Activated B cell treated with CpG ODN at 0.5 μM for 24 hours (primary cell): ENCODE measurements at regions of chr16 and their contacts with region 1.

Region 1: DNA sequence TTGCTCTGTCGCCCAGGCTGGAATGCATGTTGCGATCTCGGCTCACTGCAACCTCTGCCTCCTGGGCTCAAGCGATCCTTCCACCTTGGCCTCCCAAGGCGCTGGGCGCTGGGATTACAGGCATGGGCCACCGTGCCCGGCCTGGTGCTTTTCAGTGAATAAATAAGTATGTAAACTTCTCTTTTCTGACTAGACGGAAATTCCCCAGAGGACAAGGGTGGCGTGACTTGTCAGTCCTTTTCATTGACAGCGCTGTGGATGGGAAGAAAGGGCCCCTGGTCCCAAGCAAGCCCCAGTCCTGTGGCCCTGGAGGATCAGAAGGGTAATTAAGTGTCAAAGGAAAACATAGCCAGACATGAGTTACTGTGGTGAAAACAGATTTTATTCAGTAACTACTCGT is 9.6 kb upstream of the SPN start:
- DNase-seq: peak; percentile 38
- ATAC-seq: peak; percentile 94
- H3K4me3 Mint-ChIP-seq: peak overlapping the region; percentile 62
- H3K27ac Mint-ChIP-seq: peak overlapping the region; percentile 73
- H3K4me1 Mint-ChIP-seq: peaks cover 19% of the 10 kb centered on the region
- H3K27me3 Mint-ChIP-seq: no peaks in the 10 kb centered on the region
- CTCF ChIP-seq: no peak

Region 2: GRCh38 chr16:29664091-29664921 is 10.8 kb after region 1 on chr16:
- CTCF ChIA-PET with region 1: no interaction called
- POLR2A ChIA-PET with region 1: interaction called, 4 read pairs
- intact Hi-C with region 1: loop called (anchors 2 kb)
- DNase-seq: no peak
- ATAC-seq: peak; percentile 18
- H3K4me3 Mint-ChIP-seq: peak overlapping the region; percentile 74
- H3K27ac Mint-ChIP-seq: peak overlapping the region; percentile 68
- H3K4me1 Mint-ChIP-seq: peaks cover 63% of the 10 kb centered on the region
- H3K27me3 Mint-ChIP-seq: no peaks in the 10 kb centered on the region
- CTCF ChIP-seq: no peak

Region 3: GRCh38 chr16:29717113-29717512 is 63.6 kb after region 1 on chr16:
- CTCF ChIA-PET with region 1: no interaction called
- POLR2A ChIA-PET with region 1: no interaction called
- intact Hi-C with region 1: no loop called
- DNase-seq: no peak
- ATAC-seq: no peak
- H3K4me3 Mint-ChIP-seq: no peak overlapping the region
- H3K27ac Mint-ChIP-seq: no peak overlapping the region
- H3K4me1 Mint-ChIP-seq: peaks cover 7% of the 10 kb centered on the region
- H3K27me3 Mint-ChIP-seq: no peaks in the 10 kb centered on the region
- CTCF ChIP-seq: no peak

Region 4: GRCh38 chr16:29775742-29776408 is 122.4 kb after region 1 on chr16:
- CTCF ChIA-PET with region 1: no interaction called
- POLR2A ChIA-PET with region 1: no interaction called
- intact Hi-C with region 1: no loop called
- DNase-seq: no peak
- ATAC-seq: no peak
- H3K4me3 Mint-ChIP-seq: no peak overlapping the region
- H3K27ac Mint-ChIP-seq: no peak overlapping the region
- H3K4me1 Mint-ChIP-seq: no peaks in the 10 kb centered on the region
- H3K27me3 Mint-ChIP-seq: no peaks in the 10 kb centered on the region
- CTCF ChIP-seq: no peak

Region 5: DNA sequence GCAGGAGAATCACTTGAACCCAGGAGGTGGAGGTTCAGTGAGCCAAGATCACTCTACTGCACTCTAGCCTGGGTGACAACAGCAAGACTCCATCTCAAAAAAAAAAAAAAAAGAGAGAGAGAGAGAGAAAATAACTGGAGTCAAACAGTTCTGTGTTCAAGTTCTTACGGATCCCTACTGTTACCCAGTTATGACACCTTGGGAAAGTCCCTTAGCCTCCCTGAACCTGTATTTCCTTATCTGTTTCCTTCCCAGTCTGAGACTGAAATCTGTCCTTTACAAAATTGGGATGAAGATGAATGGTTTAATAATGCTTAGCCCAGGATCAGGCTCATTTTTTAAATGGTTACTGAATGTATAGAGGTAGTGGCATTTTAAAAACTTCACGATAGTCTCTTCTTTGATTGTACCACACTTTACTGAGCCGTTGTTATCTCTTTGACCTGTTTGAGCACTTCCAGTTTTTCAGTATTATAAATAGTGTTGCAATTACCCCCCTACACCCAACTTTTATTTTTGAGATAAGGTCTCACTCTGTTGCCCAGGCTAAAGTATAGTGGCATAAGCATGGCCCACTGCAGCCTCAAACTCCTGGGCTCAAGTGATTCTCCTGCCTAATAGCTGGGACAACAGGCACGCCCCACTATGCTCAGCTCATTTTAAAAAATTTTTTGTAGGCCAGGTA is 855.8 kb after region 1 on chr16:
- CTCF ChIA-PET with region 1: no interaction called
- POLR2A ChIA-PET with region 1: interaction called, 12 read pairs
- intact Hi-C with region 1: no loop called
- DNase-seq: no peak
- ATAC-seq: no peak
- H3K4me3 Mint-ChIP-seq: no peak overlapping the region
- H3K27ac Mint-ChIP-seq: no peak overlapping the region
- H3K4me1 Mint-ChIP-seq: no peaks in the 10 kb centered on the region
- H3K27me3 Mint-ChIP-seq: no peaks in the 10 kb centered on the region
- CTCF ChIP-seq: no peak